ENCODE measurements at regions of chr3 and their contacts with region 1.

Region 1: GRCh38 chr3:107235928-107236315 is 141.3 kb upstream of the CCDC54 start:
- DNase-seq: peak; percentile 88
- H3K4me3 ChIP-seq: peak overlapping the region; percentile 28 to 86 (median 53)
- H3K27ac ChIP-seq: no peak overlapping the region
- H3K4me1 ChIP-seq: no peaks in the 10 kb centered on the region
- H3K27me3 ChIP-seq: no peaks in the 10 kb centered on the region
- CTCF ChIP-seq: peak; percentile 63 to 74
- POLR2A ChIP-seq: no peak

Region 2: DNA sequence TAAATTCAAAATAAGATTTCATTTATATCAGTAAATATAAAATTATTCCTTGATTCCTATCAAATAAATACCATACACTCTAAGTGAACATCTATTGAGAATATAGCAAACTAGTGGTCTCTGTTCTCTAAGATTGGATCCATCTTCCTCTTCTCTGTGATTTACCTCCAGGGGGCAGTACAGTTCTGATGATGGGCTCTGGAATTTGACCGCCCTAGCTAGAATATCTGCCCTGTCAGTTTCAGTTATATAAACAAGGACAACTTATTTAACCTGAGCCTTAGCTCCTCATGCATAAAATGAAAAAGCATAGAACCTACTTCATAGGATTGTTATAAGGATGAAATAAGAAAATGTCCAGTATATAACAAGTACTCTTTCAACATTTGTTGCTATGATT is 29.8 kb before region 1 on chr3:
- CTCF ChIA-PET with region 1: interaction called, 20 read pairs
- POLR2A ChIA-PET with region 1: no interaction called
- dilution Hi-C with region 1: no loop called
- intact Hi-C with region 1: loop called (anchors 1 kb)
- DNase-seq: peak; percentile 28
- H3K4me3 ChIP-seq: no peak overlapping the region
- H3K27ac ChIP-seq: no peak overlapping the region
- H3K4me1 ChIP-seq: peaks cover 22% of the 10 kb centered on the region
- H3K27me3 ChIP-seq: no peaks in the 10 kb centered on the region
- CTCF ChIP-seq: peak; percentile 34 to 39
- POLR2A ChIP-seq: no peak

Region 3: GRCh38 chr3:107421170-107421792 is 185.4 kb after region 1 on chr3:
- CTCF ChIA-PET with region 1: interaction called, 82 read pairs
- POLR2A ChIA-PET with region 1: no interaction called
- dilution Hi-C with region 1: no loop called
- intact Hi-C with region 1: loop called (anchors 1 kb)
- DNase-seq: peak; percentile 65
- H3K4me3 ChIP-seq: peak overlapping the region in 1 of 3 experiments; percentile 69
- H3K27ac ChIP-seq: no peak overlapping the region
- H3K4me1 ChIP-seq: peaks cover 2% of the 10 kb centered on the region
- H3K27me3 ChIP-seq: peaks cover 3 to 13% of the 10 kb centered on the region in 2 experiments
- CTCF ChIP-seq: peak; percentile 52 to 55
- POLR2A ChIP-seq: no peak

Region 4: GRCh38 chr3:107543666-107544065 is 307.7 kb after region 1 on chr3:
- CTCF ChIA-PET with region 1: interaction called, 8 read pairs
- POLR2A ChIA-PET with region 1: no interaction called
- dilution Hi-C with region 1: no loop called
- intact Hi-C with region 1: loop called (anchors 1 kb)
- DNase-seq: peak; percentile 30
- H3K4me3 ChIP-seq: no peak overlapping the region
- H3K27ac ChIP-seq: no peak overlapping the region
- H3K4me1 ChIP-seq: no peaks in the 10 kb centered on the region
- H3K27me3 ChIP-seq: no peaks in the 10 kb centered on the region
- CTCF ChIP-seq: peak; percentile 7 to 17
- POLR2A ChIP-seq: no peak

Region 5: DNA sequence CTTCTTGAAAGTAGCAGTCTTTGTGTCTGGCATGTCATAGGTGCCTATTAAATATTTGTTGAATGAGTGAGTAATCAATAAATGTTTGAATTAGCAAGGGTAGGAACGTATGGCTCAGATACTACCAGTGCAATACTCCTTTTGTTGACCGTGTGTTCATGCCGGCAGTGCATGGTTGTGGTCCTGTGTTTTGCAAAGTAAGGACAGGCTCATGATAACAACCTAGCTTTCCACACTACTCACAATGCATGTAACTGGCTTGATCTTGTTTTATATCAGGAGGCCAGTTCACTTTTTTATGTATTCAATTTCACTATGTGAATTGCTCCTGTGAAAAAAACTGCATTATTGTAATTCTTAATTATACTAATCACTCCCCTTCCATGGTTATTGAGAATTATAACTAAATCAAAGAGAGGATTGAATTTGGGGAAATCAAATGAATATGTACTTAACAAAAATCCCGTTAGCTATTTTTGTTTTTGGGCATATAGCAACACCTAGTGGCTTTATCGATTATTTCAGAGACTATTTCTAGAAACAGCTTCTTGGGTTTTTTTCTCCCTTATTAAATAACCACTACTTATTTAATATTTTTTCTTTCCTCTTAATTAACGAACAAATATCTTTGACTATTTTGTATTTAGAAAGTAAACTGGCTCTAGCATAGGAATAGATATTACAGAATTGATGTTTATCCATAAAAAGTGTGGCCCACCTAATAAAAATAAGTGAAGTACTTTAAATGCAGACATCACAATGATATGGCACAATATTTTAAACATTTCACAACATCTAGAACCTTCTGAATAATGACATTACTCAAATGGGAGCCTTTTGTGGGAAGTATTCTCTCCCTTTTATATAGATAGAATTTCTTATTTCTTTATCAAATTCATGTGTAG is 505.3 kb after region 1 on chr3:
- CTCF ChIA-PET with region 1: interaction called, 15 read pairs
- POLR2A ChIA-PET with region 1: no interaction called
- dilution Hi-C with region 1: no loop called
- intact Hi-C with region 1: loop called (anchors 1 kb)
- DNase-seq: peak; percentile 59
- H3K4me3 ChIP-seq: no peak overlapping the region
- H3K27ac ChIP-seq: no peak overlapping the region
- H3K4me1 ChIP-seq: no peaks in the 10 kb centered on the region
- H3K27me3 ChIP-seq: no peaks in the 10 kb centered on the region
- CTCF ChIP-seq: peak in 1 of 2 donors; percentile 25
- POLR2A ChIP-seq: no peak

Region 6: DNA sequence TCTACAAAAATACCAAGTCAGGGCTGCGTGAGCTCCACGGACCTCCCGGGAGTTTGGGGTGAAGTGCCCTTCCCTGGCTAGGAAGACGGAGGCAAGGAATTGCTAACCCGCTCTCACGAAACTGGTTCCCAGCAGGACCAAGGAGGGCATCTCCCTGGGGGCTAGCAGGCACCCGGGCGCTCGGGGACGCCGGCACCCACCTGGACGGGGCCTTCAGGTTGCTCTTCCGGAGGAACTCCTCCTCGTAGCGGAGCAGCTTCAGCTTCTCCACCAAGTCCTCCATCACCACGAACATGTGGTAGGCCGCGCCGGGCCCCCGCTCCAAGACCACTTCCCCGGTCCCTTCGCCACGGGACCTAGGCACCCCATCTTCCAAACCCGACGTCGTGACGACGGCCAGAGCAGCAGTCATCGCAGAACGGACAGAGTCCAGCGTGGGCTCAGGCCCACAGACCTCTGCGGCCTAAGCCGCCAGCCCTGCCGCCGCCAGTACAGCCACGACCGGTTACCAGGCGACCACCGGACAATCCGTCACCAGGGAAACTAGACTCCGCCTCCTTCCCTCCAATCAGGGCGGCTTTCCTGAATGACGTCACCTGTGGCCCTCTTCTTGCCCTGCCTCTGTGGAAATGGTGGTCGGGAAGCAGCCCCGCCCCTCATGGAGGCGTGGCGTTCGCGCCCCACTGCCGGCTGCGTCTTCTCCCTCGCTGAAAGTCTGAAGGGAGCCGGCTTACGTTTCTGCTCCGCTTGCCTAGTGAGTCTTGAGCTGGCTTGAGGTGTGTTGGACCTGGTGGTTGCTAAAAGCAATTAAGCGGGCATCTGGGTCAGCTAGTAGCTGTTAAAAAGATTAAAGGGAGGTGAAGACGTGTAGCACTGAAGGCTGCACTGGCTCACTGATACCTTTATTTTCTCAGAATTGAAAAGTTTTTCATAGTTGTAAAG is 986.3 kb after region 1 on chr3 and contains the start of gene IFT57:
- CTCF ChIA-PET with region 1: no interaction called
- POLR2A ChIA-PET with region 1: no interaction called
- dilution Hi-C with region 1: no loop called
- intact Hi-C with region 1: loop called (anchors 10 kb)
- DNase-seq: peak; percentile 99
- H3K4me3 ChIP-seq: peak within 1 kb of the TSS; percentile 66 to 87 (median 82)
- H3K27ac ChIP-seq: peak within 1 kb of the TSS; percentile 68
- H3K4me1 ChIP-seq: peaks cover 21% of the 10 kb centered on the region
- H3K27me3 ChIP-seq: no peaks in the 10 kb centered on the region
- CTCF ChIP-seq: no peak
- POLR2A ChIP-seq: peak; percentile 36
- total RNA-seq, gene IFT57: 23.4 and 25.1 TPM in 2 replicates

Measured in endothelial cell of umbilical vein (primary cell).